H1 (cell line): ENCODE measurements at regions of chr7 and their contacts with region 1.

Region 1: GRCh38 chr7:25158966-25159365 is 33.9 kb upstream of the CYCS start:
- DNase-seq: no peak
- H3K4me3 ChIP-seq: no peak overlapping the region
- H3K27ac ChIP-seq: no peak overlapping the region
- H3K4me1 ChIP-seq: no peaks in the 10 kb centered on the region
- H3K27me3 ChIP-seq: peaks cover 0 to 2% (median 0%) of the 10 kb centered on the region in 4 experiments; a peak in 2 of 7 replicates
- CTCF ChIP-seq: no peak
- EP300 ChIP-seq: no peak
- POLR2A ChIP-seq: no peak
- RAD21 ChIP-seq: no peak

Region 2: DNA sequence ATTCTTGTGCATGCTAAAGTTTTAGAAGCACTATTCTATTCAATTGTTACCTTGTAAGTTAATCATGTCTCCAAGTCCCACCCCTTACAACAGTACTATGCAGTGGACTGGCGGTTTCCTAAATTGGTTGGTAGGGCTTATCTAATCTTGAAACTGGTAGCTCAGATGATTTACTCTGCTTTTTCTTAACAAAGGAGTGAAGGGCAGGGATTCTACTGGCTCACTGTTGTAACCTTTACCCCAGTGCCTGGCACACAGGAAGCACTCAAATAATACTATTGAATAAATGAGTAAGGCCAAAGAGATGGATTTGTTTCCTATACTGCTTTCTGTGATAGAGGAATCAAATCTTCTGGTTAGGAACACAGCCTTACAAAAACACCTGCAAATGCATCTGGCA is 12.1 kb after region 1 on chr7:
- CTCF ChIA-PET with region 1: interaction called, 14 read pairs
- POLR2A ChIA-PET with region 1: no interaction called
- DNase-seq: no peak
- H3K4me3 ChIP-seq: no peak overlapping the region; a peak in 1 of 8 replicates
- H3K27ac ChIP-seq: no peak overlapping the region
- H3K4me1 ChIP-seq: peaks cover 1 to 5% (median 3%) of the 10 kb centered on the region in 4 experiments; a peak in 2 of 7 replicates
- H3K27me3 ChIP-seq: no peaks in the 10 kb centered on the region
- CTCF ChIP-seq: no peak
- EP300 ChIP-seq: no peak
- POLR2A ChIP-seq: no peak
- RAD21 ChIP-seq: no peak